Mammary epithelial cell (primary cell): ENCODE measurements at regions of chr1 and their contacts with region 1.

Region 1: DNA sequence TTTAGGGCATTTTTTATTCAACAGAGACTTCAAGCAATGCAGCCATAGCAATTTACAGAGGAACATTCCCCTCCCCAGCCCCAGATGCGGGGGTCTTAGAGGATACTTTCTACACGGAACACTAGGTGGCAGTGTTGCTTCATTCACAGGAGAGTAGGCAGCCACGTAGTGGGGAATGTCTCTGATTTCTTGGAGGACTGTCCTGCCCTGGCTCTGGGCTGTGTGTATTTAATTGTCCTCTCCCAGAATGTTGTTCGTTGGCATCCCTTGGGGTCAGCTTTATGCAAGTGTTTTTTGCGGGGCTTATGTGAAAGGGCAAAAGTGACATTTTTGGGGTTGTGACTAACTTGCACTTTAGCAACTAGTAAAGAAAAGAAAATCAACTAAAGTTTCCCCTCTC is 96.9 kb downstream of the PAPPA2 start:
- DNase-seq: peak; percentile 27
- H3K4me3 ChIP-seq: no peak overlapping the region
- H3K27ac ChIP-seq: no peak overlapping the region
- H3K4me1 ChIP-seq: peaks cover 5% of the 10 kb centered on the region
- H3K27me3 ChIP-seq: no peaks in the 10 kb centered on the region
- CTCF ChIP-seq: peak; percentile 66 to 93

Region 2: DNA sequence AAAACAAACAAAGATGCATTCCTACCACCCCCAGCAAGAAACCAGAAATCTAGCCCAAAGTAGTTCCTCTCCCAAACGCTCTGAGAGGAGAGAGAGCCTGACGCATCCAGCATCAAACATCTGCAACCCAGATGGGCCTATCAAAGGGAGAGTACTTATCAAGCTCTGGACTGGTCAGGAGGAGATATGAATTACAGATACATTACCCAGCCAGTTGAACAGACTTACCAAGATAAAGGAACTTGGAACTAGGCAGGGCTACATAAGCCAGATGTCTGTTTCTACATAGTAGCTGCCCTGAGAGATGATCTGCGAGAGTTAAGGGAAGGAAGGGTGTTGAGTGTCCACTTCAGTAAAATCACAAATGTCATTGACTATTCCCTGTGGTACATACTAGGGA is 41.5 kb after region 1 on chr1:
- CTCF ChIA-PET with region 1: no interaction called
- dilution Hi-C with region 1: no loop called
- in situ Hi-C with region 1: no loop called
- intact Hi-C with region 1: no loop called
- DNase-seq: no peak
- H3K4me3 ChIP-seq: no peak overlapping the region
- H3K27ac ChIP-seq: no peak overlapping the region
- H3K4me1 ChIP-seq: no peaks in the 10 kb centered on the region
- H3K27me3 ChIP-seq: peaks cover 4% of the 10 kb centered on the region
- CTCF ChIP-seq: no peak

Region 3: DNA sequence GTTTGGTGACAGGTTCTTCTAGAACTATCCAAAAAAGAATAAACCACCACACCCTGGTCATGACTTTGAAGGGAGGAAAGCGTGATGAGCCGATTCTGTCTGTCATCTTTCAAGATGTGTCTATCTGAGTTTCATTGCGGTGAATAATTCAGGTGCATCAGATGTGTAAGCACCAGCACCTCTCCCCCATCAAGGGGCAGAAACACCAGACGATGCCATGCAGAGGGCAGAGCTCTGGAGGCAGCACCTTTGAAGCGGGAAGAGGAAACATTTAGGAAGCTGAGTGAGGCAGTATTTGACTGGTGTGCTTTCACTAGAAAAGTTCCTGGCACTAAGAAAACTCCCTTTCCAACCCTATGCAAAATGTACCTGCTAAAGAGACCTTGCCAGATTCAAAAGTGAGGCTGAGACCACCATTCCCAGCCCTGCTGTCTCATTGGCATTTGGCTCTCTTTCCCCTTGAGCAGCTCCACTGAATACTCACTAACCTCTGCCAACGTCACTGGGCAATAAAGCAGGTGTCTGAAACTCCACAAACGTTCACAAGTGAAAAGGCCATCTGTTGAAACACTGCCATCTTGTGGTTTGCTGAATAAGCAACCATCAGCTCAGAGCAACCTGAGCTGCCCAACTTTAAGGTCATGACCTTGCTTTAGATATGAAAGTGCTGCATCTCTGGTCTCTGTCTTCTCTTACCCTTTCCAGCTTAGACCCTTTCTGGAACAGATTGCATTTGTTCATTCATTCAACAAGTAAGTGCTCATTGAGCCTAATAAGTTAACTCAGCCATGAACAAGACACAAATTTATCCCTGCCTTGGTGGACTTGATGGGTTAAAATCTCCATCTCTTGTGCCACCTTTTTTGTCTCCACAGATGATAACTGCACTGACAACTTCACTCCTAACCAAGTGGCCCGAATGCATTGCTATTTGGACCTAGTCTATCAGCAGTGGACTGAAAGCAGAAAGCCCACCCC is 131.7 kb after region 1 on chr1:
- CTCF ChIA-PET with region 1: no interaction called
- dilution Hi-C with region 1: no loop called
- in situ Hi-C with region 1: loop called in 1 of 2 experiments (anchors 25 kb)
- intact Hi-C with region 1: loop called (anchors 1 kb)
- DNase-seq: peak; percentile 49
- H3K4me3 ChIP-seq: no peak overlapping the region
- H3K27ac ChIP-seq: no peak overlapping the region
- H3K4me1 ChIP-seq: peaks cover 1% of the 10 kb centered on the region
- H3K27me3 ChIP-seq: no peaks in the 10 kb centered on the region
- CTCF ChIP-seq: peak; percentile 82 to 85

Region 4: GRCh38 chr1:176843352-176844297 is 283.7 kb after region 1 on chr1:
- CTCF ChIA-PET with region 1: no interaction called
- dilution Hi-C with region 1: no loop called
- in situ Hi-C with region 1: no loop called
- intact Hi-C with region 1: loop called (anchors 1 kb)
- DNase-seq: peak; percentile 12
- H3K4me3 ChIP-seq: no peak overlapping the region
- H3K27ac ChIP-seq: no peak overlapping the region
- H3K4me1 ChIP-seq: no peaks in the 10 kb centered on the region
- H3K27me3 ChIP-seq: peaks cover 5% of the 10 kb centered on the region
- CTCF ChIP-seq: peak; percentile 38 to 66

Region 5: DNA sequence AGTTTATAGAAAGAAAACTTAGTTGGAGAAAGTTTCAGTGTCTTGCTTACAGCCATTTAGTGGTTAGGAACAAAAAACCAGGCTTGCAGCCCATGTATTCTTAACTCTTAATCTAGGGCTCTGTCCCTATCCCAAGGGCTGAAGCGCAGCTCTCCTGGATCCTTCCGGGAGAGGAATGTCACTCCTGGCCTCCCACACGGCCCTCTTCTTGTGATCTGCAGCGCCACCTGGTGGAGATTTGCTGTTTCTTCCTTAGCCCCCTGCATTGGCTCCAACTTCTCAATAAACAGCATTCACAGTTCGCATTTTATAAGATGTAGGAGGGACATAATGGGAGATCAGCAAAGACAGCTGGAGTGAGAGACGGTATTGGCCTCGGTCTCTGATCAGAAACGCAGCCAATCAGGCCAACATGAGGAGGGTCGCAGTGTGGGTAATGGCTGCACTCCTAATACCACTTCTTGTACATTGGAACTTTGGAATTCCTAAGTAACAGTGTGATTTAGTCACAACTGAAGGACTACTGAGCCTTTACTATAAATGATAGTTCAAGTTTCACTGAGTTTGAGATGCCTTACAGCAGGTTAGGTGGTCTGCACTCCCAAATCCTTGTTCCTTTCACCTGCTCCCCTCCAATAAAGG is 321.2 kb after region 1 on chr1:
- CTCF ChIA-PET with region 1: interaction called, 3 read pairs
- dilution Hi-C with region 1: no loop called
- in situ Hi-C with region 1: loop called (anchors 5 to 10 kb)
- intact Hi-C with region 1: loop called (anchors 1 kb)
- DNase-seq: peak; percentile 50
- H3K4me3 ChIP-seq: no peak overlapping the region
- H3K27ac ChIP-seq: no peak overlapping the region
- H3K4me1 ChIP-seq: peaks cover 11% of the 10 kb centered on the region
- H3K27me3 ChIP-seq: no peaks in the 10 kb centered on the region
- CTCF ChIP-seq: peak; percentile 73 to 90